Mammary epithelial cell (primary cell): ENCODE measurements at regions of chr4 and their contacts with region 1.

Region 1: GRCh38 chr4:37749398-37749988 is 63.3 kb upstream of the RELL1 start:
- DNase-seq: no peak
- H3K4me3 ChIP-seq: no peak overlapping the region
- H3K27ac ChIP-seq: no peak overlapping the region
- H3K4me1 ChIP-seq: no peaks in the 10 kb centered on the region
- H3K27me3 ChIP-seq: no peaks in the 10 kb centered on the region
- CTCF ChIP-seq: no peak

Region 2: GRCh38 chr4:37584071-37584470 is 165.4 kb before region 1 on chr4:
- CTCF ChIA-PET with region 1: no interaction called
- dilution Hi-C with region 1: no loop called
- in situ Hi-C with region 1: no loop called
- intact Hi-C with region 1: no loop called
- DNase-seq: no peak
- H3K4me3 ChIP-seq: no peak overlapping the region
- H3K27ac ChIP-seq: no peak overlapping the region
- H3K4me1 ChIP-seq: no peaks in the 10 kb centered on the region
- H3K27me3 ChIP-seq: no peaks in the 10 kb centered on the region
- CTCF ChIP-seq: no peak

Region 3: GRCh38 chr4:37693450-37694190 is 55.9 kb before region 1 on chr4:
- CTCF ChIA-PET with region 1: no interaction called
- dilution Hi-C with region 1: loop called (anchors 5 kb)
- in situ Hi-C with region 1: no loop called
- intact Hi-C with region 1: no loop called
- DNase-seq: peak; percentile 77
- H3K4me3 ChIP-seq: no peak overlapping the region
- H3K27ac ChIP-seq: no peak overlapping the region
- H3K4me1 ChIP-seq: peaks cover 14% of the 10 kb centered on the region
- H3K27me3 ChIP-seq: no peaks in the 10 kb centered on the region
- CTCF ChIP-seq: no peak

Region 4: GRCh38 chr4:38266616-38267015 is 517.1 kb after region 1 on chr4:
- CTCF ChIA-PET with region 1: no interaction called
- dilution Hi-C with region 1: no loop called
- in situ Hi-C with region 1: no loop called
- intact Hi-C with region 1: no loop called
- DNase-seq: peak; percentile 37
- H3K4me3 ChIP-seq: no peak overlapping the region
- H3K27ac ChIP-seq: no peak overlapping the region
- H3K4me1 ChIP-seq: no peaks in the 10 kb centered on the region
- H3K27me3 ChIP-seq: no peaks in the 10 kb centered on the region
- CTCF ChIP-seq: no peak